ENCODE measurements at regions of chr16 and their contacts with region 1.

Region 1: DNA sequence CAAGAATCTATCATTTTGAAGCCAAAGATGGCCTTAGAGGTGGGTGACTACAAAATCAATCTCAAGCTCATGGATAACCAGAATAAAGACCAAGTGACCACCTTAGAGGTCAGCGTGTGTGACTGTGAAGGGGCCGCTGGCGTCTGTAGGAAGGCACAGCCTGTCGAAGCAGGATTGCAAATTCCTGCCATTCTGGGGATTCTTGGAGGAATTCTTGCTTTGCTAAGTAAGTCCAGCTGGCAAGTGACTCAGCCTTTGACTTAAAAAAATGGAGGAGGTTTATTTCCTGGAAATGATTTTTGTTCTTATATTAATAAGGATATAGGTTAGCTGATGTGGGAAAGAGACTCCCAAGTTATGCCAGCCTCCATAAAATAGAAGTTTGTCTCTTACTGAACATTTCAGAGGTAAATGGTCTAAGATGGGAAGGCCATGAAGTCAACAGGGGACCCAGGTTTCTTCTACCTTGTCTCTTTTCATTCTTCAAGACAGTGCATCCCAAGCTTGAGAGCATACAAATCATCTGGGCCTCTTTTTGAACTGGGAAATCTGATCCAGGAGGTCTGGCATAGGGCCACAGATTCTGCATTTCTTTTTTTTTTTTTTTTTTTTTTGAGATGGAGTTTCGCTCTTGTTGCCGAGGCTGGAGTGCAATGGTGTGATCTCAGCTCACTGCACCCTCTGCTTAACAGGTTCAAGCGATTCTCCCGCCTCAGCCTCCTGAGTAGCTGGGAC is 19.8 kb upstream of the TANGO6 start:
- DNase-seq: no peak
- H3K4me3 Mint-ChIP-seq: no peak overlapping the region
- H3K27ac Mint-ChIP-seq: no peak overlapping the region
- H3K4me1 Mint-ChIP-seq: no peaks in the 10 kb centered on the region
- H3K27me3 Mint-ChIP-seq: no peaks in the 10 kb centered on the region
- CTCF ChIP-seq: no peak

Region 2: DNA sequence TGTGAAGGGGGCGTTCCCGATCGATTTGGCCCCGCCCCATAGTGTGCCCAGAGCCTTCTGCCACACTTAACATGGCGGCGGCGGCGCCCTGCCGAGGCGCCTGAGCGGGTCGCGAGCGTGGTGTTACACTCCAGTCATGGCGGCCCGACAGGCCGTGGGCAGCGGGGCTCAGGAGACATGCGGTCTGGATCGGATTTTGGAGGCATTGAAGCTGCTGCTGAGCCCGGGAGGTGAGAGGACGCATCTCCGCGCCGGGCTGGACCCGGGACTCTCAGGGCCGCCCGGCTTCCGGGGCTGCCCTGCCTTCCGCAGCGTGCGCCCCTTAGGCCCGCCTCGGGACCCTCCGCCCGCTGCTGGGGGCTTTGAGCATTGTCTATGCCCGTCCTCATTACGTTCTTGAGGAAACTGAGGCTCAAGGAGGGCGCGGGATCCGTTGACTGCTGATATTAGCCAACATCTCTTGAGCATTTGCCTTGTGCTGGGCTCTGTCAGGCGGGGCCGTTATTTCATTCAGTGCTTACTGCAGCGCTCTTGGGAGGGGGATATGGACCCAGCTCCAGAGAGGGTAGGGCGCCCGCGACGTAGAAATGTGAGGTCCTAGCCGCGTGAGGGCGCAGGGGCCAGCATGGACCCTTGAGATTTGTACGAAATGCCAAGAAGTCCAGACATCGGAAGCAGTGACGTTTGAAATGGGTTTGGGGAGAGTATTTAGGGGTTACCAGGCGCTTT is 20.1 kb after region 1 on chr16 and contains the start of gene TANGO6:
- CTCF ChIA-PET with region 1: interaction called, 11 read pairs
- POLR2A ChIA-PET with region 1: interaction called, 11 read pairs
- intact Hi-C with region 1: no loop called
- DNase-seq: peak; percentile 79
- H3K4me3 Mint-ChIP-seq: peak within 1 kb of the TSS; percentile 82
- H3K27ac Mint-ChIP-seq: peak within 1 kb of the TSS; percentile 82
- H3K4me1 Mint-ChIP-seq: peaks cover 10% of the 10 kb centered on the region
- H3K27me3 Mint-ChIP-seq: no peaks in the 10 kb centered on the region
- CTCF ChIP-seq: no peak
- total RNA-seq, gene TANGO6: 14.6 and 21.8 TPM in 2 replicates

Measured in MCF 10A (cell line).